CD4-positive, alpha-beta memory T cell (primary cell): ENCODE measurements at regions of chr19 and their contacts with region 1.

Region 1: DNA sequence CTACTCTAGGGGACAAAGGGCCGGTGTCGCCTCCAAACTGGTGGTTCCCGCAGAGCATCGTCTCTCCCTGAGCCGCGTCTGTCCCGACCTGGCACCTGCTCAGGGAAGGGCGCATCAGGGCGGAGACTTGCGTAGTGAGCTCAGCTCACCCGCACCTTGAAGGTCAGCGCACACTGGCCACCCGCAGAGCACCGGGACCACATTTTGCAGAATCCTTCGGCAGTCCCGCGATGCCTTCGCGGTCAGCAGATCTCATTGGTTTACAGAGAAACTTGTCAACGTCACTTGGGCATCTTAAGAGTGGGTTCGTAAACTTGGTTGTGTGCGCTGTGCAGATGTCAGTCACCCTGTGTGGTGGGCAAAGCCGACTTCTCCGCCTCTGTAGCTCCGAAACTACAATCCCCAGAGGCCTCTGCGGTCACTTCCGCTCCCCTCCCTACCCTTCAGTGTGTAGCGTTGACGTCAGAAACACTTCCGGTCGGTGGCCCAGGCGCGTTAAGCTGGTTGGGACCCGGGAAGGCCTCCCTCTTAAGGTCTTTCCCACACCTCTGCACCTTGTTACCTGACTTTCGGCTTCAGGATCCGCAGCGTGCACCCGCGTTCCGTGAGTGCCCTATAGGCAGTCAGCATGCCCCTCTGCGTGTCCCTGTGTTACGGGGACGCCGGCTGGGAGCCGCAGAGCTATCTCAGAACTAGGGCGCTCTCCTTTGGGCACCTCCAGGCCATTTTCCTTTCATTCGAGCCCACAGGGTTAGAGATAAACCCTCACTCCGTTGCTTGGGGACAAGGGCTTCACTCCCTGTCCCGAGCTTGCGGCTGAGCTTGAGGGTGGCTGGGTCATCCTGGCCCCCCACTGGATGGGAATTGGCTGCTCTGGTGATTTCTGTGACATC is 36.5 kb upstream of the ZNF527 start:
- DNase-seq: peak; percentile 84 to 96 (median 90)
- H3K4me3 ChIP-seq: peak overlapping the region; percentile 71 to 83
- H3K4me3 Mint-ChIP-seq: peak overlapping the region; percentile 89 to 95 (median 92)
- H3K27ac ChIP-seq: peak overlapping the region; percentile 80
- H3K27ac Mint-ChIP-seq: peak overlapping the region; percentile 89 to 98 (median 95)
- H3K4me1 ChIP-seq: peaks cover 12% of the 10 kb centered on the region
- H3K4me1 Mint-ChIP-seq: peaks cover 20 to 42% (median 31%) of the 10 kb centered on the region in 4 donors
- H3K27me3 ChIP-seq: no peaks in the 10 kb centered on the region
- H3K27me3 Mint-ChIP-seq: no peaks in the 10 kb centered on the region

Region 2: DNA sequence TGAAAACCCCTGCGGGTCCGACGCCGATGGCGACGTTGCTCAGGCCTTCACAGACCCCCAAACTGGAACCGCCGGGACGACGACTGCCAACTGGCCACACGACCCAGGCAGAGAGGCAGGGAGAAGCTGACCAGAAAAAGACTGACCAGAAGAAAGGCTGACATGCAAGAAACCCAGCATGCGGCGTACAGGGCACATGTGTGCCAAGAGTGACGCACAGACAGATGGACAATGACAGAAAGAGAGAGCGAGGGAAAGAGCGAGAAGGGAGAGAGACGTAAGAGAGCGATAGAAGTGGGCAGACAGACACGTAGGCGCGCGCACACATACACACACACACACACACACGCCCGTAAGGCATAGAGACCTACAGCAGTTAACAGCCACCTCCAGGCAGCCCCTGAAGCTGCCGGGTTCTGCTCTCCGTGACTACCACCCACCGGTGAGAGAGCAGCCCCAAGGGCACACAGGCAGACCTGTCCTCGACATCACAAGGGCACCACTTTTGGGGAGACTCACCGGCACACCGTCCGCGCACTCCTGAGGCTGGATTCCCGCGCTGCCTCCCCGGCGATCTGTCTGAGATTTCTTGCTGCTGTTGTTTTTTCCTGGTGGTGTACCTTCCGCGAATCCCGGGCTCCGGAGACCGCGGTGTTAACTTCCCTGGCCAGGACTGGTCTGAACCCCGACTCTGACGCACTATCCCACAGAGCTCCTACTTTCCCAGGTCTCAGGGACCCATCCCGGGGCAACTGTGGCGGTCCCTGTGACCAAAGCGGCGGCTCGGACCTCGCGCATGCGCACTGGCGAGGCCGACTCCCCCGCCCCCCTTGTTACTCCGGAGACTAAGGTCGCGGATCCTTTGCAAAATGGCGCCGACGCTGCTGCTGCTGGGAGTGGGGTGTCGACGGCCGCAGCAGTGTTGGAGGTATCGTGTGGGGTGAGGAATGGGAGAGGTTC is 30.6 kb before region 1 on chr19:
- CTCF ChIA-PET with region 1: no interaction called
- POLR2A ChIA-PET with region 1: no interaction called
- intact Hi-C with region 1: no loop called
- DNase-seq: peak in 1 of 5 donors; percentile 11
- H3K4me3 ChIP-seq: no peak overlapping the region
- H3K4me3 Mint-ChIP-seq: peak overlapping the region in 4 of 8 donors; percentile 12 to 57 (median 40)
- H3K27ac ChIP-seq: no peak overlapping the region
- H3K27ac Mint-ChIP-seq: no peak overlapping the region
- H3K4me1 ChIP-seq: no peaks in the 10 kb centered on the region
- H3K4me1 Mint-ChIP-seq: peaks cover 0 to 5% (median 0%) of the 10 kb centered on the region in 4 donors
- H3K27me3 ChIP-seq: no peaks in the 10 kb centered on the region
- H3K27me3 Mint-ChIP-seq: peaks cover 0 to 3% of the 10 kb centered on the region in 2 donors

Region 3: GRCh38 chr19:37506387-37507166 is 172.2 kb after region 1 on chr19 and contains the start of gene ZNF793:
- CTCF ChIA-PET with region 1: no interaction called
- POLR2A ChIA-PET with region 1: interaction called, 9 read pairs
- intact Hi-C with region 1: loop called (anchors 1 kb)
- DNase-seq: peak; percentile 85 to 88 (median 87)
- H3K4me3 ChIP-seq: peak within 1 kb of the TSS; percentile 57 to 78
- H3K4me3 Mint-ChIP-seq: no peak within 1 kb of the TSS
- H3K27ac ChIP-seq: peak within 1 kb of the TSS; percentile 88
- H3K27ac Mint-ChIP-seq: no peak within 1 kb of the TSS
- H3K4me1 ChIP-seq: peaks cover 17% of the 10 kb centered on the region
- H3K4me1 Mint-ChIP-seq: peaks cover 0 to 2% (median 0%) of the 10 kb centered on the region in 4 donors
- H3K27me3 ChIP-seq: no peaks in the 10 kb centered on the region
- H3K27me3 Mint-ChIP-seq: no peaks in the 10 kb centered on the region
- total RNA-seq, gene ZNF793: 10.2 to 13.8 TPM